Activated T-helper 2 cell treated with anti-CD3 and anti-CD28 coated beads, Interferon-gamma antibody, Interleukin-2, Interleukin-4, amounts not matched to agents 10 μg/mL and 5 μg/mL and 100 μg/mL, durations not matched to agents 14 hours and 24 hours and 36 hours (primary cell): ENCODE measurements at regions of chr17 and their contacts with region 1.

Region 1: GRCh38 chr17:72725433-72726068 is 366.9 kb downstream of the SLC39A11 start:
- DNase-seq: peak; percentile 29
- H3K4me3 Mint-ChIP-seq: no peak overlapping the region
- H3K27ac Mint-ChIP-seq: peak overlapping the region; percentile 62
- H3K4me1 Mint-ChIP-seq: peaks cover 40% of the 10 kb centered on the region
- H3K27me3 Mint-ChIP-seq: no peaks in the 10 kb centered on the region

Region 2: GRCh38 chr17:72556944-72557826 is 168.4 kb before region 1 on chr17:
- intact Hi-C with region 1: loop called (anchors 1 kb)
- DNase-seq: peak; percentile 55
- H3K4me3 Mint-ChIP-seq: no peak overlapping the region
- H3K27ac Mint-ChIP-seq: no peak overlapping the region
- H3K4me1 Mint-ChIP-seq: no peaks in the 10 kb centered on the region
- H3K27me3 Mint-ChIP-seq: no peaks in the 10 kb centered on the region

Region 3: DNA sequence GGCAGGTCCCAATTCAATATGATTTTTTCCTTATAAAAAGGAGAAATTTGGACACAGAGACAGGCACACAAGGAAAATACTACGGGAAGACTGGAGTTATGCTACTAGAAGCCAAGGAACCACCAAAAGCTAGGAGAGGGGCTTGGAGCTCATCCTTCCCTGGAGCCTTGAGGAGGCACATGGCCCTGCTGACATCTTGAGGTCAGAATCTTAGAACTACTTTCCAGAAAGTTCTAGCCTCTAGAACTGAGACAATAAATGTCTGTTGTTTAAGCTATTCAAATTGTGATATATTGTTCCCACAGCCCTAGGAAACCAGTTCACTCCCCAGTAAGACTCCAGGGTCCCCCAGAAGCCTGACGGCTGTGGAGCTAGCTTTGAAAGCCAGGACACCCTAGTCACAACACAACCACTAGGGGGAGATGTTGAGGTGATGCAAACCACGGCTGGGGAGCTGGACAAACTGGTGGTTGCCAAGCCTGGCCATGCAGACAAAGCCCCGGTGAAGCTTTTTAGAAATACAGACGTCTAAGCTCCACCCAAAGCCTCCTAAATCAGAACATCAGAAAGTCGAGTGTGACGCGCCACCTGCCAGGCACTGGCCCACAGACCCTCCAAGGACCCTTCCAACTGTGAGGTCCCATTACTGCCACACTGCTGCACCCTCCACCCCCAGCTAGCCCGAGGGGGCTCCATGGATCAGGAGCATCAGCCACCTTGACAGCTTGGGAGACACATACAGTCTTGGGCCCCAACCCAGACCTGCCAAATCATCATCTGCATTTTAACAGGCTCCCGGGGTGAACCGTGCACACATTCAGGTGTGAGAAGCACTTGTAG is 260.6 kb after region 1 on chr17:
- intact Hi-C with region 1: loop called (anchors 1 kb)
- DNase-seq: peak; percentile 32
- H3K4me3 Mint-ChIP-seq: no peak overlapping the region
- H3K27ac Mint-ChIP-seq: no peak overlapping the region
- H3K4me1 Mint-ChIP-seq: peaks cover 1% of the 10 kb centered on the region
- H3K27me3 Mint-ChIP-seq: no peaks in the 10 kb centered on the region

Region 4: DNA sequence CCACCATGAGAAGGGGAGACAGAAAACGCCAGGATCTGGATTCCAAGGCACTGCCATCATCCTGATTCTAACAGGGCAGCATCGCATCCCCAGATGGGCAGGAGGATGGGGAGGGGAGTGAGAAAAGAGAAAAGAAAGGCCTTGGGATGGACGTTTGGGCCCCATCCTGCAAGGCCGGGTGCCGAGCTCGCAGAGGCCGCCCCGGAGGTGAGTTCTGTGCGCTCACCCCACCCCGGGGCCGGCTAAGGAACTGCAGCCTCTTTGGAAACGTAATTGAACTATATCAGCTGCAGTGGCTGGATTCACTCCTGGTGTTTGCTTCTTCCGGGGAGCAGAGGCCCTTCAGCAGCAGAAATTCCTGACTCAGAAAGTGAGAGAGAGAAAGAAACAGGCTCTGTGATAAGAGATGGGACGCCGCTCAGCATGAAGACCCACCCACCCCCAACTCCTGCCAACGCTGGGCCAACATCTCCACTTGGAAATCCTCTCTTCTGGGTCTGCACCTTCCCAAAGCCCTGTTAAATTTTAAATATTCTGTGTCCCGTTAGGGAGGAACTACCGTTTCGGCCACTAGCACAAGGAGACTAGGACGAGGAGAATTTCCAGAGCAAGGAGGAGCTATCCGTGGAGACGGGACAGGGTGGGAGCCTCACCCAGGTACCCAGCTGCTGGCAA is 430.8 kb after region 1 on chr17:
- intact Hi-C with region 1: loop called (anchors 2 kb)
- DNase-seq: peak; percentile 48
- H3K4me3 Mint-ChIP-seq: no peak overlapping the region
- H3K27ac Mint-ChIP-seq: no peak overlapping the region
- H3K4me1 Mint-ChIP-seq: peaks cover 14% of the 10 kb centered on the region
- H3K27me3 Mint-ChIP-seq: peaks cover 20% of the 10 kb centered on the region

Region 5: GRCh38 chr17:73231841-73232586 is 506.5 kb after region 1 on chr17:
- intact Hi-C with region 1: loop called (anchors 2 kb)
- DNase-seq: peak; percentile 93
- H3K4me3 Mint-ChIP-seq: peak overlapping the region; percentile 87
- H3K27ac Mint-ChIP-seq: peak overlapping the region; percentile 93
- H3K4me1 Mint-ChIP-seq: peaks cover 52% of the 10 kb centered on the region
- H3K27me3 Mint-ChIP-seq: no peaks in the 10 kb centered on the region

Region 6: GRCh38 chr17:73311781-73312641 is 586.5 kb after region 1 on chr17 and contains the start of gene CDC42EP4:
- intact Hi-C with region 1: loop called (anchors 10 kb)
- DNase-seq: peak; percentile 86
- H3K4me3 Mint-ChIP-seq: peak within 1 kb of the TSS; percentile 82
- H3K27ac Mint-ChIP-seq: no peak within 1 kb of the TSS
- H3K4me1 Mint-ChIP-seq: peaks cover 6% of the 10 kb centered on the region
- H3K27me3 Mint-ChIP-seq: peaks cover 17% of the 10 kb centered on the region
- total RNA-seq, gene CDC42EP4: 1.6 and 2.8 TPM in 2 replicates